ENCODE measurements at regions of chr14 and their contacts with region 1.

Region 1: DNA sequence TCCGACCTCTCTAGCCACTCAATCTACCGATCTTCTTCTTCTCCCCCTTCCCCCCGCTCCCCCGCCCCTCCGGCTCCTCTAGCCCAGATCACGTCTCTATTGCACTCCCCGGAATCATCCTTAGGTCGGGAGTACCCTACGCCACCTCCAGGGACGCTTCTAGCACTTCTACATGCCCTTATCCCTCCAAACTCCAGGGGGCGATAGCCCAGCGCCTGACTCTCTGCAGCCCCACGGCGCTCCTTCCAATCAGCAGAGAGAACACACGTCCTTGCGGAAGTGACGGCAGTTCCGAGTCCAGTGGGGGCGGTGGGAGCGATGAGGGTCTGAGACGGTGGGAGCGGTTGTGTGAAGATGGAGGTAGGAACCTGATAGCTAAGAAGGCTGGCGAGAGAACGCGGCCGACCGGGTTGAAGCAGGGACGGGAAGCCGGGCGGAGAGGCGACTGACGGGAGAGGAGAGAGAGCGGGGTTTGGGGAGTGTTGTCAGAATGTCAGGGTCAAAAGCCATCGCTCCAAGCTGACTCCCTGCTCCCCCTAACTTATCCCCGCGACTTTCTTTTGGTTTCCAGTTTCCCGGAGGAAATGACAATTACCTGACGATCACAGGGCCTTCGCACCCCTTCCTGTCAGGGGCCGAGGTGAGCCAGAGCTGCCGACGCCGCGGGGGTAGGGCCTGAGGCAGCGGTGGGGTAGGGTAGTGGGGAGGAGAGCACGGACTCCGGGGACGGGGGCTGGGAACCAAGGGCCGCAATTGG is at the starts of genes RAB2B and TOX4:
- DNase-seq: peak; percentile 95 to 96
- H3K4me3 ChIP-seq: peak within 1 kb of the TSS; percentile 88 to 100 (median 96)
- H3K27ac ChIP-seq: peak within 1 kb of the TSS; percentile 36
- H3K4me1 ChIP-seq: no peaks in the 10 kb centered on the region; a peak in 1 of 7 replicates
- H3K27me3 ChIP-seq: no peaks in the 10 kb centered on the region
- CTCF ChIP-seq: peak; percentile 83 to 99 (median 99)
- EP300 ChIP-seq: peak in 1 of 2 experiments; percentile 66; a peak in 2 of 3 replicates
- POLR2A ChIP-seq: peak in 1 of 2 experiments; percentile 71; a peak in 2 of 3 replicates
- RAD21 ChIP-seq: peak; percentile 41 to 53; a peak in 3 of 4 replicates
- total RNA-seq, gene RAB2B: 26.1 and 27.6 TPM in 2 replicates
- total RNA-seq, gene TOX4: 49.5 and 58.3 TPM in 2 replicates

Region 2: DNA sequence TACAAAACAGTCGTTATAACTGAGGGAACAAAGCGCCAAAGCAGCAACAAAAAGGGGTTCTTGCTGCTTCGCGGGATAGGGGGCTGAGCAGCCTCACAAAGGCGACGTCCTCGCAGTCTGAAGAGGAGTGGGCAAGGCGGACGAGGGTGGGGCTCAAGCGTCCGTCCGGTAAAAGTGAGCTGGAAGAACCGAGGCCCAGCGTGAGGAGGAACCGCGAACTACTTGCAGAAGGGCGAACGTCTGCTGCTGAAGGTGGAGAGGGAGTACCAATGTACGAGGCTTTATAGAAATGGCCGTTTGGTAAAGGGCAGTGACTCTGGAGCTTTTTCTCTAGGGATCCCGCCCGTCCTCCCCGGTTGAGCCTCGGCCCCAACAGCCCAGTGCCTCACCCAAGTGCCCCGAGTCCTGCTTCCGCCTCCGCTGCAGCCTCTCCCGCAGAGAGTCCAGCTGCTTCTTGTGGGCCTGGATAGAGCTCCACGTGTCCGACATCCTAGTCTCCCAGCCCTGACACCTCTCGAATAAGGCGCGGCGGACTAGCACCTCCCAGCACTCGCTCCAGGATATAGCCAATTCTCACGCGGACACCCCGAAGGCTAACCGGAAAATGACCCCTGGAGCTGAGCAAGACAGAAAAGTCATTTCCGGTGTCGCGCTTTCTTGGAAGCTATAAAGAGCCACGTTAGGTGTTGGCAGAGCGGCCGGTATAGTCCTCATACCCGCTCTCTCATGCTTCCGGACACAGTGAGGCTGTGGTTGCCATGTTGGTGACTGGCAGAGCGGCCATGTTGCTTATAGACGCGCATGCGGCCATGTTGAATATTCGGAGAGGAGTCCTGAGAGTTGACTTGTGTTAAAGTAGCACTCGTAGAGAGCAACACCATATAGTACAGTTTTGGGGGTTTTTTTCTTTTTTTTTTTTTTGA is 33.9 kb after region 1 on chr14 and contains the start of gene METTL3:
- CTCF ChIA-PET with region 1: interaction called, 5 read pairs
- POLR2A ChIA-PET with region 1: interaction called, 23 read pairs
- DNase-seq: peak; percentile 83 to 93
- H3K4me3 ChIP-seq: peak within 1 kb of the TSS; percentile 58 to 98 (median 86)
- H3K27ac ChIP-seq: peak within 1 kb of the TSS; percentile 88
- H3K4me1 ChIP-seq: peaks cover 0 to 5% (median 2%) of the 10 kb centered on the region in 4 experiments; a peak in 4 of 7 replicates
- H3K27me3 ChIP-seq: no peaks in the 10 kb centered on the region
- CTCF ChIP-seq: no peak
- EP300 ChIP-seq: no peak
- POLR2A ChIP-seq: peak; percentile 74 to 93
- RAD21 ChIP-seq: 0 out of 4 replicates have a peak, but pooled peaks of 1 of the 2 experiments have one; percentile 4
- total RNA-seq, gene METTL3: 98.6 and 103 TPM in 2 replicates